RWPE1 (cell line): ENCODE measurements at regions of chr2 and their contacts with region 1.

Region 1: GRCh38 chr2:231563378-231563961 is 29.2 kb upstream of the TEX44 start:
- DNase-seq: peak; percentile 68
- H3K27ac ChIP-seq: no peak overlapping the region
- CTCF ChIP-seq: peak; percentile 60

Region 2: GRCh38 chr2:231601349-231602229 is 38.1 kb after region 1 on chr2:
- CTCF ChIA-PET with region 1: interaction called, 35 read pairs
- POLR2A ChIA-PET with region 1: no interaction called
- DNase-seq: peak; percentile 73
- H3K27ac ChIP-seq: no peak overlapping the region
- CTCF ChIP-seq: peak; percentile 85